PC-9 (cell line): ENCODE measurements at regions of chr2 and their contacts with region 1.

Region 1: DNA sequence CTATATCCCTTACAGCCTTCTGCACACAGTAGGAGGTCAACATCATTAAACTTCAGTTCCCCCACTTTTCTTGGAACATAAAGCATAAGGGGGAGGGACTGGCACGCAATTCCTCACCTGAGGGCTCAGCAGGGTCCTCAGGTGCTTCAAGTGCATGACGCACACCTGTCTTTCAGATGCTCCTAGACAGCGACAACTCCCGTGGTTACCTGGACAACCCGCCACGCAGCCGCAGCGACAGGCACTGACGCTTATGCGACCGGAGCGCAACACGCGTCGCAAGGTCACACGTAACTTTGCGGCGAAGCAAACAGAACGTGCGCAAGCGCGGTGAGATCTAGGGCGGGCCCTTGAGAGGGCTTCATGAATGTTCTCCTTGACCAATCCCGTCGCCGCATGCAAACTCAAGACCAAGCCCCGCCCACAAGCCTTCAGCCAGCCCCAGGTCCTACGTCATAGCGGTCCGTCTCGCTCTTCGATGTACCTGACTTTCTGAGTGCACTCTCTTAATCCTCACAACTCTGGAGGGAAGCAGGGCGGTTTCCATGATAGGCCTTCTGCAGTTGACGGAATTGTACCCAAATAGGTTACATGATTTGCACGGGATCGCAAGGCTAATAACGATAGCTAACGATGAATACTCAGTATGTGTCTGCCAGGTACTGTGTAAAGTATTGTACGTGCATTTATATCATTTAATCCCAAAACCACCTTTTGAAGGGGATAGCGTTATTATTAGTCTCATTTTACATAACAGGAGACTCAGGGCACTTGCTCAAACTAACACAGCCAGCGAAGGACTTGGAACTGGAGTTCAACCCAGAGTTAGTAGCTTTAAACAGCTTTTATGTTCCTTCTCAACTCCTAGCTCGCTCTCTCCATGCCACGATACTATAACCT is at the start of gene IFT172:
- DNase-seq: peak; percentile 98 to 100
- H3K4me3 ChIP-seq: peak within 1 kb of the TSS; percentile 65
- H3K27ac ChIP-seq: peak within 1 kb of the TSS; percentile 31
- H3K4me1 ChIP-seq: peaks cover 17% of the 10 kb centered on the region
- H3K27me3 ChIP-seq: no peaks in the 10 kb centered on the region
- CTCF ChIP-seq: no peak
- total RNA-seq, gene IFT172: 26.2 and 27.2 TPM in 2 replicates

Region 2: GRCh38 chr2:27428213-27428977 is 61.4 kb before region 1 on chr2 and contains the start of gene NRBP1:
- CTCF ChIA-PET with region 1: interaction called, 10 read pairs
- POLR2A ChIA-PET with region 1: no interaction called
- intact Hi-C with region 1: no loop called
- DNase-seq: peak; percentile 77 to 90
- H3K4me3 ChIP-seq: peak within 1 kb of the TSS; percentile 64
- H3K27ac ChIP-seq: peak within 1 kb of the TSS; percentile 64
- H3K4me1 ChIP-seq: peaks cover 27% of the 10 kb centered on the region
- H3K27me3 ChIP-seq: no peaks in the 10 kb centered on the region
- CTCF ChIP-seq: no peak
- total RNA-seq, gene NRBP1: 67.9 and 83.9 TPM in 2 replicates

Region 3: DNA sequence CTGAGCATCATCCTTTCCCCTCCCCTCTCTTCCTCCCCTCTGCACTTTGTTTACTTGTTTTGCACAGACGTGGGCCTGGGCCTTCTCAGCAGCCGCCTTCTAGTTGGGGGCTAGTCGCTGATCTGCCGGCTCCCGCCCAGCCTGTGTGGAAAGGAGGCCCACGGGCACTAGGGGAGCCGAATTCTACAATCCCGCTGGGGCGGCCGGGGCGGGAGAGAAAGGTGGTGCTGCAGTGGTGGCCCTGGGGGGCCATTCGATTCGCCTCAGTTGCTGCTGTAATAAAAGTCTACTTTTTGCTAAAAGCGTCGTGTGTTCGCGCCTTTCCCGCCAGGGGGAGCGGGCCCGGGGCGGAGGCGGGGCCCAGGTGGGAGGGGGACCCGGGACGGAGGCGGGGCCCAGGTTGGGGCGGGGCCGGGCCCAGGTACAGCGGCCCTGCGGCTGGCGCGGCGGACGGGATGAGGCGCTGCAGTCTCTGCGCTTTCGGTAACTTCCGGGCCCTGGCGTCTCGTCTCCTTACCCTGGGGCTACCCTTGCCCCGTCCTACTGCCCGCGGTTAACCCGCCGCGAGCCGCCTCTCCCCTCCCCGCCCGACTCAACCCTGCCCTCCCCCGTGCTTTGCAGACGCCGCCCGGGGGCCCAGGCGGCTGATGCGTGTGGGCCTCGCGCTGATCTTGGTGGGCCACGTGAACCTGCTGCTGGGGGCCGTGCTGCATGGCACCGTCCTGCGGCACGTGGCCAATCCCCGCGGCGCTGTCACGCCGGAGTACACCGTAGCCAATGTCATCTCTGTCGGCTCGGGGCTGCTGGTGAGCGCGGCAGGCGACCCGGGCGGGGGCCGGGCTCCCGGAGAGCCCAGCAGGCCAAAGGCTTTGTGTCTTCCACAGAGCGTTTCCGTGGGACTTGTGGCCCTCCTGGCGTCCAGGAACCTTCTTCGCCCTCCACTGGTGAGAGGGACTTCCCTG is 47.5 kb before region 1 on chr2 and contains the start of gene KRTCAP3:
- CTCF ChIA-PET with region 1: no interaction called
- POLR2A ChIA-PET with region 1: no interaction called
- intact Hi-C with region 1: loop called (anchors 1 kb)
- DNase-seq: peak; percentile 69 to 86
- H3K4me3 ChIP-seq: peak within 1 kb of the TSS; percentile 79
- H3K27ac ChIP-seq: peak within 1 kb of the TSS; percentile 63
- H3K4me1 ChIP-seq: peaks cover 19% of the 10 kb centered on the region
- H3K27me3 ChIP-seq: no peaks in the 10 kb centered on the region
- CTCF ChIP-seq: peak; percentile 68
- total RNA-seq, gene KRTCAP3: 62.9 and 91.7 TPM in 2 replicates

Region 4: GRCh38 chr2:27461118-27461517 is 28.6 kb before region 1 on chr2:
- CTCF ChIA-PET with region 1: no interaction called
- POLR2A ChIA-PET with region 1: no interaction called
- intact Hi-C with region 1: no loop called
- DNase-seq: no peak
- H3K4me3 ChIP-seq: no peak overlapping the region
- H3K27ac ChIP-seq: no peak overlapping the region
- H3K4me1 ChIP-seq: no peaks in the 10 kb centered on the region
- H3K27me3 ChIP-seq: no peaks in the 10 kb centered on the region
- CTCF ChIP-seq: no peak

Region 5: DNA sequence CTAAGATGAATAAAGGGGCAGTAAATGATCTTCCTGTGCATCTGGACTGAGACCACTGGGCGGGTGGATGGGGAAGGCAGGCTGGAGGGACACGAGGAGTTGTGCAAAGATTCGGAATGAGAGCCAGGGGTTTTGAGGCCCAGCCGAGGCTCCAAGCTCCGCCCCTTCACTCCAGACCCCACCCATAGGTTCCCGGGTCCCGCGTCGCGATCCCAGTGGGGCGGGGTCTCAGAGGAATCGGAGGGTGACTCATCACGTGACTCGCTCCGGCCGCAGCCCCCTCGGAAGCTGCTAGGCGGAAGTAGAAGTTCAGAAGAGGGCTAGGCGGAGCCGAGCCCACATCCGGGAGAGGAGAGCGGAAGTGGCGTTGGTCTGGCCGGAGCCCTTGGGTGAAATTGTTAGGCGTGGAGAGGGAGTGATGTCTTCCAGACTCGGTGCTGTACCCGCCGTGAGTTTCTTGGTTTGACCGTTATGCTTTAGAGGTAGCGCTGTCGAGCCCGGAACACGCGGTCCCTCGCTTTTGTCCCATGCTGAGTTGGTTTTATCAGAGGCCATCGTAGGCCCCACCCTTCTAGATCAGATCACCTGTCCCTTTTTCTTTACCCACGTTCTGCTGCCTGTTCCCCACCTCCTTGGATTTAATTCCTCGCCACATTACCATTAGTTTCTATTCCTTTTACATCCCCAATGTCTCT is 93.1 kb after region 1 on chr2 and contains the start of gene ZNF512:
- CTCF ChIA-PET with region 1: no interaction called
- POLR2A ChIA-PET with region 1: no interaction called
- intact Hi-C with region 1: loop called (anchors 5 kb)
- DNase-seq: peak; percentile 79 to 80
- H3K4me3 ChIP-seq: peak within 1 kb of the TSS; percentile 93
- H3K27ac ChIP-seq: peak within 1 kb of the TSS; percentile 58
- H3K4me1 ChIP-seq: peaks cover 20% of the 10 kb centered on the region
- H3K27me3 ChIP-seq: no peaks in the 10 kb centered on the region
- CTCF ChIP-seq: no peak; the same call in 1 of the 2 replicates
- total RNA-seq, gene ZNF512: 27.1 and 40.6 TPM in 2 replicates

Region 6: DNA sequence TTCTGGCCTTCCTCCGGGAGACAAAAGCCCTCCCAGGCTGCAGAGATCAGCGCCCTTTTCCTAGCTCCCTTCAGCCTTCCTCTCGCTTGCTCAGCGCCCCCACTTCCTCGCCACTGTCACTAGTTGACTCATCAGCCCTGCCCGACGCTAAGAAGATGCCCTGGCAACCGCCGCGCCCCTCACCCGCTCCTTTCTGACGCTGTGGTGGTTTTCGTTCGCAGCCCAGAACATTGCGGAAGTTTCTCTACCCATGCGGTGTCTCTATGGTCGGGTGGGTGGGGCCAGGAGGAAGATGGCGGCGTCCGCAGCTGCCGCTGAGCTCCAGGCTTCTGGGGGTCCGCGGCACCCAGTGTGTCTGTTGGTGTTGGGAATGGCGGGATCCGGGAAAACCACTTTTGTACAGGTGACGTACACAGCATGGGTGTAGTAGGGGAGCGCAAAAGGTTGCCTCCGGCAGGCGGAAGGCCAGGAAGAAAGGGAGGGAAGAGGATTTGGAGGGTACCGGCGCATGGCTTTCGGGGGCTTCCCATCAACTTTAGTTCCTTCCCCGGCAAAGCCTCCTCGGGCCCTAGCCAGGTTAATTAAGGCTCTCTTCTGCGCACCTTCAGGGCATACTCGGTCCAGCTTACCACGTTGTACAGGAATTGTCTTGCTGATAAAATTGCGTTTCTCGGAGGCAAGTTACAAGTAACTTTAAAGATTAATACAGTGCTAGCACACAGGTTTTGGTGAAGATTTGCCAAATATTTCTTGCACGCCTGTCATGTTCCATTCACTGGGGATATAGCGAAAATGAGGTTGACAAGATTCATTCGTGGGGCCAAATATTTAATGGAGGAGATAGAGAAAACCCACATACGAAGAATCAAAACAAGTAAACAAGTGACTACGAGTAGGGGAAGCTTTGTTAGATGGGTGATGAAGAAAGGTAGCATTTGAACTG is 139.3 kb after region 1 on chr2 and contains the starts of genes CCDC121 and GPN1:
- CTCF ChIA-PET with region 1: no interaction called
- POLR2A ChIA-PET with region 1: no interaction called
- intact Hi-C with region 1: loop called (anchors 2 kb)
- DNase-seq: peak; percentile 89 to 91
- H3K4me3 ChIP-seq: peak within 1 kb of the TSS; percentile 86
- H3K27ac ChIP-seq: peak within 1 kb of the TSS; percentile 86
- H3K4me1 ChIP-seq: peaks cover 27% of the 10 kb centered on the region
- H3K27me3 ChIP-seq: no peaks in the 10 kb centered on the region
- CTCF ChIP-seq: no peak
- total RNA-seq, gene CCDC121: 1.9 and 2.9 TPM in 2 replicates
- total RNA-seq, gene GPN1: 37.3 and 45.1 TPM in 2 replicates